ENCODE measurements at regions of chr16 and their contacts with region 1.

Region 1: GRCh38 chr16:15607700-15608396 is 35.1 kb downstream of the MARF1 start:
- DNase-seq: no peak
- ATAC-seq: no peak
- H3K4me3 Mint-ChIP-seq: no peak overlapping the region
- H3K27ac Mint-ChIP-seq: peak overlapping the region in 5 of 10 donors; percentile 7 to 87 (median 60)
- H3K4me1 Mint-ChIP-seq: peaks cover 2 to 17% (median 10%) of the 10 kb centered on the region in 4 donors
- H3K27me3 Mint-ChIP-seq: no peaks in the 10 kb centered on the region

Region 2: DNA sequence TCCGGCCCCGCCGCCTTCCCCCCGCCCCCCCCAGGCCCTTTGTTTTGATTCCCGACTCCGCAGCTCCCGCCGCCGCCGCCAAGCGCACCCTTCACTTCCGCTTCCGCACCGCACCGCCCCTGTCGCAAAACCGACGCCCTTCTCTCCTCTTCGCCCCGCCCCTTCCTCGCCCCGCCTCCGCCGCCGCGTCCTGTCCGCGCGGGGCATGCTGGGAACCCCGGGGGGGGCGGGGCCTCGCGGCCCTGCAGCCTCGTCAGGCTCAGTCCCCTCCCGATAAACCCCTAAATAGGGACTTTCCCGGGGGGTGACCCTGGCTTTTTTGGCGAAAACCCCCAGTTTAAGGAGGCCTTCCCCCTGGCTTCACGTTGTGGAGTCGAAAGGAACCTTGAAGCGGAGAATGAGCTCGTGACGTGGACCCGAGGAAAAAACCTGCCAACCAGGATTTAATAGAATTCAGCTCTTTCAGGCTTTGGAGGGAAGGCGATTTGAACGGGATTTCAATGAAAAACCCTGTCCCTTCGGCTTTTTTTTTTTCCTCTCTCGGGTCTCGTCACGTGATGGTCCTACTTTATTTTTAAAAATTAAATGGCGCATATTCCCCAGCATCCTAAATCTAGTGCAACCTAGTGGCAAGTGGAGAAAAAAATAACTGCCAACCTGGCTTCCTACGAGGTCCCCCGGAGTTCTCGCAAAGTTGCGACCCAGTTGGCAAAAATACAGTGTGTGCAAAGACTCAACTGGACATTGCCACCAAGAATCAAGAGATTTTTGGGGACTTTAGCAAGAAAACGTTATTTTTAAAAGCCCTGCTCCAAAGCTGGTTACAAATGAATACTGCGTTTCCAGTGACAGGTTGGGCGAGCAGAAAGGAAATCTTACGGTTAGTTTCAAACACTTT is 35.4 kb after region 1 on chr16 and contains the start of gene MARF1:
- POLR2A ChIA-PET with region 1: no interaction called
- DNase-seq: peak; percentile 97 to 100 (median 99)
- ATAC-seq: peak; percentile 66 to 77
- H3K4me3 Mint-ChIP-seq: peak within 1 kb of the TSS; percentile 90 to 98 (median 93)
- H3K27ac Mint-ChIP-seq: peak within 1 kb of the TSS; percentile 95 to 99 (median 98)
- H3K4me1 Mint-ChIP-seq: peaks cover 26 to 55% (median 44%) of the 10 kb centered on the region in 4 donors
- H3K27me3 Mint-ChIP-seq: no peaks in the 10 kb centered on the region
- polyA plus RNA-seq, gene MARF1: 10.9 to 18.2 (median 15.2) TPM

Region 3: DNA sequence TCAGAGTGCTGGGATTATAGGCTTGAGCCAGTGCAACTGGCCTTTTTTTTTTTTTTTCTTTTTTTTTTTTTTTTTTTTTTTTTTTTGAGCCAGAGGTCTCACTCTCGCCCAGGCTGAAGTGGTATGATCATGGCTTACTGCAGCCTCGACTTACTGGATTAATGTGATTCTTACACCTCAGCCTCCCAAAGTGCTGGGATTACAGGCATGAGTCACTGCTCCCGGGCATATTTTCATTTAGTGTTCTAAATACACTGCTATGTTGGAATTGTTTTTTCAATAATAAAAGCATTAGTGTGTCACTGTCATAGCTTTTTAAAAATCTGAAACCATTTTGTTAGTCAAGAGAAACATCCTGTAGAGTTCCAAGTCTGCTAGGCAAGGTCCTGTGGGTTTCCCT is 82.4 kb after region 1 on chr16:
- POLR2A ChIA-PET with region 1: interaction called, 11 read pairs
- DNase-seq: no peak
- ATAC-seq: no peak
- H3K4me3 Mint-ChIP-seq: no peak overlapping the region
- H3K27ac Mint-ChIP-seq: no peak overlapping the region
- H3K4me1 Mint-ChIP-seq: peaks cover 0 to 5% (median 4%) of the 10 kb centered on the region in 4 donors
- H3K27me3 Mint-ChIP-seq: no peaks in the 10 kb centered on the region